GM12878 (cell line): ENCODE measurements at regions of chr20 and their contacts with region 1.

Region 1: DNA sequence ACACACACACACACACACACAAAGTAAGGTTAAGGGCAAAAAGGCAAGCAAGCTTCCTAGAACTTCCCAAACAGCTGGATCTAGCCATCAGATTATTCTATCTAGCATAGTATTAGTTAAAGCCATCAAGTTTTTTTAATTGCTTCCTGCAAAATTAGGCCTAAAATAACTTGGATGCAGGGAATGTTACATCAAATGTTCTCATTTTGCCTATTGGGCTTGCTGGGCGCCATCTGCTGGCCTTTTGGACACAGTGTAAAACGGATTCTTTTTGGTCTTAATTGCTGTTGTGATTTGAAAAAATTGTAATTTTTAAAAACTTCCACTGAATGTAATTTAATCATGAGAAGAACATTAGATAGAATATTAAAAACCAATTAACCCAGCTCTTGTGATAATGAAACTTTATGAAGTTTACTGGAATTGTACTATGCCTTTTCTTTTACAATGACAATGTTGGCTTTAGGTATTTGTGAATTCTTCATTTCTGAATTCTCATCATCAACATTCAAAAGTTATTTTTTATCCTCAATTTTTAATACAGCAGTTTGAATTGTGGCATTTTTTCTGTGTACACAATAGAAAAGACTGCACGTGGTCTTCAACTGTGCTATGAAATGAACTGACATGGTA is 6.8 kb downstream of the MKKS start:
- DNase-seq: no peak
- ATAC-seq: peak; percentile 37
- H3K4me3 ChIP-seq: no peak overlapping the region
- H3K27ac ChIP-seq: no peak overlapping the region
- H3K4me1 ChIP-seq: peaks cover 18% of the 10 kb centered on the region
- H3K27me3 ChIP-seq: no peaks in the 10 kb centered on the region
- CTCF ChIP-seq: peak; percentile 75 to 78 (median 75)
- EP300 ChIP-seq: no peak
- POLR2A ChIP-seq: no peak
- RAD21 ChIP-seq: peak; percentile 63

Region 2: DNA sequence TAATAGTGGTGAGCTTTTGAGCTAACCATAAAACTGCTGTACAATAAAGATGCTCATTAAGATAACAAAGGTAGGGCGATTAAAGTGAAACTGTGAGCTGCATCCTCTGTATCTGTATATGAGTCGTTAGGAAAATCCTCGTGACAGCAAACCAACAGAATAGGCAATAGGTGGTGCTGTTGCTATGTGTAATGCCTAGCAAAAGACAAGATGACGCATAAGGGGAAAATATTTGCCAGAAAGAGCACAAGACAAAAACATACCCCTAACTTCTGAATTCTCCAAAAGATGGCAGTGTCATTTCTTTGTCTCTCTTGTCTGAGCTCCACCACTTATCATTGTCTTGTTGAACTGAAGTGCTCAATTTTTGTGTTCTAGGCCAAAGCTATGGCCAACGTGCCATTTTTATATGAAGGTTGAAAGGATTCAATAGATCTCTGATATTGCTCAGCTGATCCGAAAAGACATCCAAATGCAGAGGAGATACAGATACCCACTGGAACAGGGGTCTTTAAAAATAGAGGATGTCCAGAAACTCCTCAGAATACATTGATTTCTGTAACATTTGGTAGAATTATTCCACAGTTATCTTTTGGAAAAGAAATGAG is 448.7 kb before region 1 on chr20:
- CTCF ChIA-PET with region 1: interaction called, 59 read pairs
- POLR2A ChIA-PET with region 1: no interaction called
- RAD21 ChIA-PET with region 1: interaction called, 6 read pairs
- SMC1A ChIA-PET with region 1: interaction called, 11 read pairs
- in situ Hi-C with region 1: loop called (anchors 5 kb)
- intact Hi-C with region 1: loop called (anchors 1 kb)
- DNase-seq: peak; percentile 41
- ATAC-seq: peak; percentile 97
- H3K4me3 ChIP-seq: no peak overlapping the region
- H3K27ac ChIP-seq: no peak overlapping the region
- H3K4me1 ChIP-seq: no peaks in the 10 kb centered on the region
- H3K27me3 ChIP-seq: no peaks in the 10 kb centered on the region; a peak in 1 of 4 replicates
- CTCF ChIP-seq: peak; percentile 61 to 94 (median 79)
- EP300 ChIP-seq: no peak
- POLR2A ChIP-seq: no peak
- RAD21 ChIP-seq: peak; percentile 96

Region 3: DNA sequence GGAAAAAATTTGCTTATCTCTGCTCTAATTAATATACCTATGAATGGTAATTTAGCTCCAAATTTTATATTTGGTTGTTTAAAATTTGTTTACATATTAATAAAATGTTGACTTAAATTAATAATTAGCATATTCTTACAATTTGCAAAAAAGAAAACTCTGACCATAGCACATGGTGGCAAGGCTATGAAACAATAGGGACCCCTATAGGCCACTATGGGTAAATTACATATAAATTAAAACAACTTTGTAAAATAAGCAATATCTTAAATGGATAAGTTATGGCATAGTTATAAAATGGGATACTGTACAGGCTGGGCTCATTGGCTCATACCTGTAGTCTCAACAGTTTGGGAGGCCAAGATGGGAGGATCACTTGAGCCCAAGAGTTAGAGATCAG is 69.2 kb before region 1 on chr20:
- CTCF ChIA-PET with region 1: interaction called, 7 read pairs
- POLR2A ChIA-PET with region 1: interaction called, 5 read pairs
- RAD21 ChIA-PET with region 1: interaction called, 7 read pairs
- SMC1A ChIA-PET with region 1: interaction called, 60 read pairs
- in situ Hi-C with region 1: no loop called
- intact Hi-C with region 1: loop called (anchors 5 kb)
- DNase-seq: no peak
- ATAC-seq: no peak
- H3K4me3 ChIP-seq: no peak overlapping the region
- H3K27ac ChIP-seq: no peak overlapping the region
- H3K4me1 ChIP-seq: no peaks in the 10 kb centered on the region
- H3K27me3 ChIP-seq: no peaks in the 10 kb centered on the region
- CTCF ChIP-seq: no peak
- EP300 ChIP-seq: no peak
- POLR2A ChIP-seq: no peak
- RAD21 ChIP-seq: no peak

Region 4: GRCh38 chr20:10381493-10381892 is 45.7 kb before region 1 on chr20:
- CTCF ChIA-PET with region 1: interaction called, 24 read pairs
- POLR2A ChIA-PET with region 1: no interaction called
- RAD21 ChIA-PET with region 1: interaction called, 8 read pairs
- SMC1A ChIA-PET with region 1: interaction called, 14 read pairs
- in situ Hi-C with region 1: no loop called
- intact Hi-C with region 1: no loop called
- DNase-seq: no peak
- ATAC-seq: peak; percentile 87
- H3K4me3 ChIP-seq: no peak overlapping the region
- H3K27ac ChIP-seq: no peak overlapping the region
- H3K4me1 ChIP-seq: no peaks in the 10 kb centered on the region
- H3K27me3 ChIP-seq: no peaks in the 10 kb centered on the region
- CTCF ChIP-seq: peak in 1 of 3 experiments; percentile 19; a peak in 2 of 6 replicates
- EP300 ChIP-seq: no peak
- POLR2A ChIP-seq: no peak
- RAD21 ChIP-seq: no peak

Region 5: GRCh38 chr20:10412591-10413408 is 14.4 kb before region 1 on chr20:
- CTCF ChIA-PET with region 1: interaction called, 63 read pairs
- POLR2A ChIA-PET with region 1: interaction called, 3 read pairs
- RAD21 ChIA-PET with region 1: interaction called, 11 read pairs
- SMC1A ChIA-PET with region 1: interaction called, 43 read pairs
- in situ Hi-C with region 1: no loop called
- intact Hi-C with region 1: no loop called
- DNase-seq: no peak
- ATAC-seq: peak; percentile 85
- H3K4me3 ChIP-seq: no peak overlapping the region
- H3K27ac ChIP-seq: no peak overlapping the region
- H3K4me1 ChIP-seq: peaks cover 8% of the 10 kb centered on the region
- H3K27me3 ChIP-seq: no peaks in the 10 kb centered on the region
- CTCF ChIP-seq: peak; percentile 19 to 32 (median 20); a peak in 1 of 6 replicates
- EP300 ChIP-seq: peak; percentile 26 to 53; a peak in 2 of 4 replicates
- POLR2A ChIP-seq: no peak
- RAD21 ChIP-seq: no peak

Region 6: GRCh38 chr20:10453241-10453640 is 26.1 kb after region 1 on chr20:
- CTCF ChIA-PET with region 1: interaction called, 13 read pairs
- POLR2A ChIA-PET with region 1: no interaction called
- RAD21 ChIA-PET with region 1: interaction called, 4 read pairs
- SMC1A ChIA-PET with region 1: interaction called, 12 read pairs
- in situ Hi-C with region 1: no loop called
- intact Hi-C with region 1: no loop called
- DNase-seq: peak; percentile 66
- ATAC-seq: peak; percentile 95
- H3K4me3 ChIP-seq: no peak overlapping the region
- H3K27ac ChIP-seq: peak overlapping the region; percentile 73
- H3K4me1 ChIP-seq: peaks cover 17% of the 10 kb centered on the region
- H3K27me3 ChIP-seq: no peaks in the 10 kb centered on the region
- CTCF ChIP-seq: no peak
- EP300 ChIP-seq: peak; percentile 36 to 60; a peak in 2 of 4 replicates
- POLR2A ChIP-seq: no peak
- RAD21 ChIP-seq: no peak